Sigmoid colon (tissue), 7 donors: ENCODE measurements at regions of chr6 and their contacts with region 1.

Region 1: GRCh38 chr6:32432050-32432450 is 7.6 kb upstream of the HLA-DRA start:
- DNase-seq: no peak
- H3K4me3 ChIP-seq: no peak overlapping the region
- H3K27ac ChIP-seq: no peak overlapping the region
- H3K4me1 ChIP-seq: no peaks in the 10 kb centered on the region
- H3K27me3 ChIP-seq: peaks cover 0 to 5% (median 0%) of the 10 kb centered on the region in 3 donors
- CTCF ChIP-seq: peak in 2 of 4 experiments; percentile 16 to 36
- EP300 ChIP-seq: no peak
- POLR2A ChIP-seq: no peak

Region 2: DNA sequence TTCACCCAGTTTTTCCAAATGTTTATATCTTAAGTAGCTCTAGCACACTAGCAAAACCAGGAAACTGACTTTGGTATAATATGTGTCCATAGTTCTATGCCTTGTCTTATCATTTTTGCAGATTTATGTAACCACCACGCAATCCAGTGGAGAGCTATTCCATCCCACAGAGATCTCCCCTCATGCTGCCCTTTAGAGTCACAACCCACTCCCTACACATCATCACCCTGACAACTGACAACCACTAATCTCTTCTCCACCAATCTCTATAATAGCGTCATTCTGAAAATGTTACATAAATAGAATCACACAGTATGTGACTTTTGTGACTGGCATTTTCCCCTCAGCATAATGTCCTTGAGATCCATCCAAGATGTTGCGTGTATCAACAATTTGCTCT is 69.0 kb after region 1 on chr6:
- intact Hi-C with region 1: no loop called
- DNase-seq: no peak
- H3K4me3 ChIP-seq: no peak overlapping the region
- H3K27ac ChIP-seq: no peak overlapping the region
- H3K4me1 ChIP-seq: no peaks in the 10 kb centered on the region
- H3K27me3 ChIP-seq: no peaks in the 10 kb centered on the region
- CTCF ChIP-seq: no peak
- EP300 ChIP-seq: no peak
- POLR2A ChIP-seq: no peak

Region 3: GRCh38 chr6:32700391-32701040 is 268.5 kb after region 1 on chr6:
- intact Hi-C with region 1: loop called (anchors 5 kb)
- DNase-seq: no peak
- H3K4me3 ChIP-seq: no peak overlapping the region
- H3K27ac ChIP-seq: no peak overlapping the region
- H3K4me1 ChIP-seq: no peaks in the 10 kb centered on the region
- H3K27me3 ChIP-seq: peaks cover 0 to 41% (median 0%) of the 10 kb centered on the region in 3 donors
- CTCF ChIP-seq: peak in 3 of 4 experiments; percentile 53 to 64 (median 58)
- EP300 ChIP-seq: no peak
- POLR2A ChIP-seq: no peak

Region 4: DNA sequence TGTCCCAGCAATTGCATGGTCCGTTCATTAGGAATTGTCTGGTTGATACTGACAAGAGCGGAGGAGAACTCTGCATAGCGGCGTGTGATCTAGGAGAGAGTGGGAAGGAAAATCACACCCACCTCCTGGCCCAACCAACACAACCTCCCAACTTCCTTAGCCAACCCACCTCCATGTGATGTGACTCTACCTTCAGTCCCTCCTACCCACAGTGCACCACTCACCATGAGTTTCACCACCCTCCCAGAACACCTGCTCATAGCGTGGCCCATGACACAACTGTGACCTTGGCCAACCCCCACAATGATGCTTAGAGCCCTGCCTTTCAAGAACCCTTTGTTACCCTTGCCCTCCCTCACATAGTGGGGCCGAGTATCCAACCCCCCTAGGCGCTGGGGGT is 832.0 kb after region 1 on chr6:
- intact Hi-C with region 1: no loop called
- DNase-seq: no peak
- H3K4me3 ChIP-seq: no peak overlapping the region
- H3K27ac ChIP-seq: no peak overlapping the region
- H3K4me1 ChIP-seq: no peaks in the 10 kb centered on the region
- H3K27me3 ChIP-seq: no peaks in the 10 kb centered on the region
- CTCF ChIP-seq: no peak
- EP300 ChIP-seq: no peak
- POLR2A ChIP-seq: no peak